ENCODE measurements at regions of chr1 and their contacts with region 1.

Region 1: GRCh38 chr1:110312188-110313121 is 26.7 kb upstream of the RBM15 start:
- DNase-seq: peak; percentile 49 to 85 (median 77)
- ATAC-seq: peak; percentile 99
- H3K4me3 ChIP-seq: no peak overlapping the region
- H3K4me3 Mint-ChIP-seq: no peak overlapping the region
- H3K27ac ChIP-seq: no peak overlapping the region
- H3K27ac Mint-ChIP-seq: no peak overlapping the region
- H3K4me1 ChIP-seq: peaks cover 2% of the 10 kb centered on the region
- H3K4me1 Mint-ChIP-seq: peaks cover 3% of the 10 kb centered on the region
- H3K27me3 ChIP-seq: no peaks in the 10 kb centered on the region
- H3K27me3 Mint-ChIP-seq: no peaks in the 10 kb centered on the region
- CTCF ChIP-seq: peak; percentile 87

Region 2: DNA sequence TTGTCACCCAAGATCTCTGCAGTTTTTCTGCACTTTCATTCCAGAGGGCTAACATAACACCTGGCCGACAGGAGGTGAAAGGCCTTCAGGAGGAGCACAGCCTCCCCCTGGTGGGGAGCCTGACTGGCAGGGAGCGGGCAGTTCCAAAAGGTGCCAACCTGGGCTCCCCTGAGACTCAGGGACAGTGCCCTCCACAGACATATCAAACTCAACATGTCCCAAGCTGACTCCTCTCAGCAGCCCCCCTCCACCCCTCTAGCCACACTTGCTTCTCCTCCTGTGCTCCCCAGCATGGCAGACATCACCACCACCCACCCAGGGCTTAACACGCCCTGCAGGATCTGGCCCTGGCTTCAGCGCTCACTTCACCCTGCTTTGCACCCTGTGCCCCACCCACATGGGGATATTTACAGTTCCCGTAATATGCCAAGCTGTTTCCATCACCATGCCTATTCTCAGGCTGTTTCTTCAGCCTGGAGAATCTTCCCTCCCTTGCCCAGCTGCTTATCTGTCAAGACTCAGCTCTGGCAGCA is 331.6 kb before region 1 on chr1:
- CTCF ChIA-PET with region 1: no interaction called
- POLR2A ChIA-PET with region 1: no interaction called
- intact Hi-C with region 1: no loop called
- DNase-seq: peak in 3 of 9 experiments; percentile 15 to 39 (median 21)
- ATAC-seq: no peak
- H3K4me3 ChIP-seq: no peak overlapping the region
- H3K4me3 Mint-ChIP-seq: no peak overlapping the region
- H3K27ac ChIP-seq: no peak overlapping the region
- H3K27ac Mint-ChIP-seq: no peak overlapping the region
- H3K4me1 ChIP-seq: peaks cover 10% of the 10 kb centered on the region
- H3K4me1 Mint-ChIP-seq: peaks cover 11% of the 10 kb centered on the region
- H3K27me3 ChIP-seq: peaks cover 0 to 5% of the 10 kb centered on the region in 2 experiments
- H3K27me3 Mint-ChIP-seq: peaks cover 14% of the 10 kb centered on the region
- CTCF ChIP-seq: no peak

Region 3: GRCh38 chr1:110190282-110190929 is 122.0 kb before region 1 on chr1:
- CTCF ChIA-PET with region 1: interaction called, 48 read pairs
- POLR2A ChIA-PET with region 1: no interaction called
- intact Hi-C with region 1: no loop called
- DNase-seq: no peak
- ATAC-seq: no peak
- H3K4me3 ChIP-seq: no peak overlapping the region
- H3K4me3 Mint-ChIP-seq: no peak overlapping the region
- H3K27ac ChIP-seq: no peak overlapping the region
- H3K27ac Mint-ChIP-seq: no peak overlapping the region
- H3K4me1 ChIP-seq: no peaks in the 10 kb centered on the region
- H3K4me1 Mint-ChIP-seq: no peaks in the 10 kb centered on the region
- H3K27me3 ChIP-seq: no peaks in the 10 kb centered on the region
- H3K27me3 Mint-ChIP-seq: peaks cover 10% of the 10 kb centered on the region
- CTCF ChIP-seq: no peak

Region 4: GRCh38 chr1:110196917-110197765 is 115.3 kb before region 1 on chr1:
- CTCF ChIA-PET with region 1: interaction called, 783 read pairs
- POLR2A ChIA-PET with region 1: interaction called, 11 read pairs
- intact Hi-C with region 1: no loop called
- DNase-seq: peak in 8 of 9 experiments; percentile 15 to 71 (median 55)
- ATAC-seq: peak; percentile 99
- H3K4me3 ChIP-seq: no peak overlapping the region
- H3K4me3 Mint-ChIP-seq: no peak overlapping the region
- H3K27ac ChIP-seq: no peak overlapping the region
- H3K27ac Mint-ChIP-seq: no peak overlapping the region
- H3K4me1 ChIP-seq: no peaks in the 10 kb centered on the region
- H3K4me1 Mint-ChIP-seq: no peaks in the 10 kb centered on the region
- H3K27me3 ChIP-seq: no peaks in the 10 kb centered on the region
- H3K27me3 Mint-ChIP-seq: no peaks in the 10 kb centered on the region
- CTCF ChIP-seq: peak; percentile 94

Region 5: GRCh38 chr1:110300412-110301085 is 11.9 kb before region 1 on chr1:
- CTCF ChIA-PET with region 1: interaction called, 18 read pairs
- POLR2A ChIA-PET with region 1: no interaction called
- intact Hi-C with region 1: no loop called
- DNase-seq: no peak
- ATAC-seq: no peak
- H3K4me3 ChIP-seq: no peak overlapping the region
- H3K4me3 Mint-ChIP-seq: no peak overlapping the region
- H3K27ac ChIP-seq: no peak overlapping the region
- H3K27ac Mint-ChIP-seq: no peak overlapping the region
- H3K4me1 ChIP-seq: no peaks in the 10 kb centered on the region
- H3K4me1 Mint-ChIP-seq: no peaks in the 10 kb centered on the region
- H3K27me3 ChIP-seq: no peaks in the 10 kb centered on the region
- H3K27me3 Mint-ChIP-seq: peaks cover 2% of the 10 kb centered on the region
- CTCF ChIP-seq: no peak

Region 6: DNA sequence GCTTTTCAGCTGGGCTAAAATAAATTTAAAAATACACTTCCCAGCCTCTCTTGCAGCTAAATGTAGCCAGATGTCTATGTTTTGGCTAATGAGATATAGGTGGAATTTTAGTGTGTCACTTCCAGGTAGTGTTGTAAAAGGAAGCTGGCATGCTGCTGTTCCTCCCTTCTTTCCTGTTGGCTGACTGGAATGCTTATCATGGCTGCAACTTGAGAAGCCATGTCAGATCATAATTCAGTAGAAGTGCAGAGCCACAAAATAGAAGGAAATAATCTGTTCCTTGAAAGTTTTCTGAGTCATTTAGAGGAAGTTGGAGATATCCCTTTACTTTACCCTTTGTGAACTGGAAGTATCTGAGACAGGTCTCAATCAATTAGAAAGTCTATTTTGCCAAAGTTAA is 15.8 kb after region 1 on chr1:
- CTCF ChIA-PET with region 1: interaction called, 12 read pairs
- POLR2A ChIA-PET with region 1: no interaction called
- intact Hi-C with region 1: no loop called
- DNase-seq: no peak
- ATAC-seq: no peak
- H3K4me3 ChIP-seq: no peak overlapping the region
- H3K4me3 Mint-ChIP-seq: no peak overlapping the region
- H3K27ac ChIP-seq: no peak overlapping the region
- H3K27ac Mint-ChIP-seq: no peak overlapping the region
- H3K4me1 ChIP-seq: no peaks in the 10 kb centered on the region
- H3K4me1 Mint-ChIP-seq: no peaks in the 10 kb centered on the region
- H3K27me3 ChIP-seq: no peaks in the 10 kb centered on the region
- H3K27me3 Mint-ChIP-seq: no peaks in the 10 kb centered on the region
- CTCF ChIP-seq: no peak

Measured in CD8-positive, alpha-beta T cell (primary cell).